AG04450 (cell line): ENCODE measurements at regions of chr19 and their contacts with region 1.

Region 1: GRCh38 chr19:34972163-34972705 is 8.2 kb upstream of the ZNF792 start:
- DNase-seq: no peak
- H3K4me3 ChIP-seq: no peak overlapping the region
- H3K27ac ChIP-seq: no peak overlapping the region
- H3K27me3 ChIP-seq: peaks cover 8% of the 10 kb centered on the region
- CTCF ChIP-seq: no peak

Region 2: DNA sequence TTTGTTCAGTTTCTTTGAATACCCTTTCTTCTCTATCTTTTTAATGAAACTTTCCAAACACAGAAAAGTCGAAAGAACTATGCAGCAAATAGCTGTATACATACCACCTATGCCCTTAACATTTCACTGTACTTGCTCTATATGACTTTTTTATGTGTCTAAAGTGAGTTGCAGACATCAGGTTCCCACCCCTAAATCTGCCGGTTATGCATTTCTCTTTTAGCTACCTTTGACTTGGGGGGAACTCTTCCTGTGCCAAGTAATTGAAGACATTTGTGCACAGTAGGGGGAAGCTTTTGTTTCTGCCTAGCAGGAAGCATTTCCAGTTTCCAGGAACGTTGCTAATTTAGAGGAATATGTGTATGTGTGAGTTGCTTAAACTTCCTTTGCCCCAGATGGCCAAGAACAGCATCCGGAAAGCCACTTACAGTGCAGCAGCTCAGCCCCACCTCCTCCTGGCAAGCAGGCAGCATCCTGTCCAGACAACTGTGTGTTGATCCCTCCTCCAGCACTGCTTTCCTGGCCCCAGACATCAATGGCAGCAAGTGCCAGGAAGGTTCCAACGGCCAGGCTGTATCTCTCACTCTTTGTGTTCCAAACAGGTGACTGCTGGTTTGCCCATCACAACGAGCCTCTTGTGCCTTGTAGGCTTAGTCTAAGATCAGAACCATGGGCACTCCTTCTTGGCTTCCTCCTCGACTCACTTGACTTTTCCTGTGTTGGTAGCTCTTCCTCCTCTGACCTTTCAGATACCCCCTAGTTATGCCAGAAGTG is 13.2 kb after region 1 on chr19:
- CTCF ChIA-PET with region 1: interaction called, 11 read pairs
- POLR2A ChIA-PET with region 1: no interaction called
- DNase-seq: no peak
- H3K4me3 ChIP-seq: no peak overlapping the region
- H3K27ac ChIP-seq: no peak overlapping the region
- H3K27me3 ChIP-seq: peaks cover 10% of the 10 kb centered on the region
- CTCF ChIP-seq: no peak

Region 3: DNA sequence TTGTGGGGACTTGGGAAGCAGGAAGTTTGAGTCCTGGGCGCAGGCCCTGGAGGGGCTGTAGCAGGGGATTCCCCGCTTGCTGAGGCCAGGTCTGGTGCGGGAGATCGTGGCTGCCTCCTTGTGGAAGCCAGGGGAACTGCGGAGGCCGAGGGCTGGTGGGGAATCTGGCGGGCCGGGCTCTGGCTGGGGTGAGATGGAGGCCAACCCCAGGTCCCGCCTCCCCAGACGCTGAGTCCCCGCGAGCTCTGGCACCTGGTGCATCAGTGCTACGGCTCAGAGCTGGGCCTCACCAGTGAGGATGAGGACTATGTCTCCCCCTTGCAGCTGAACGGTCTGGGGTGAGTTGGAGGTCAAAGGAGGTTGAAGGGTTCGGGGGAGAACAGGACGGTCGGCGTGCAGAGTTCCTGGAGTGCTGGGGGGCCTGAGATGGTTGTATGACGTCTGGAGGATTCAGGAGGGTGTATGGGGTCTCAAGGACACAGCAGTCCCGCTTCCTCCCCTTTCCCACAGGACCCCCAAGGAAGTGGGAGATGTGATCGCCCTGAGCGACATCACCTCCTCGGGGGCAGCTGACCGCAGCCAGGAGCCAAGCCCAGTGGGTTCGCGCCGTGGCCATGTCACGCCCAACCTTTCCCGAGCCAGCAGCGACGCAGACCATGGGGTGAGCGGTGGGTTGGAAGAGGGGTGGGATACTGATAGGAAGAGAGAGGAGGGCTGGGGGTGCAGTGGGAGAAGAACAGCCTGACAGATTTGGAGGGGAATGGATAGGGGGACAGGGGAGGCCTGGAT is 41.0 kb after region 1 on chr19:
- CTCF ChIA-PET with region 1: interaction called, 31 read pairs
- POLR2A ChIA-PET with region 1: no interaction called
- DNase-seq: no peak
- H3K4me3 ChIP-seq: no peak overlapping the region
- H3K27ac ChIP-seq: no peak overlapping the region
- H3K27me3 ChIP-seq: no peaks in the 10 kb centered on the region
- CTCF ChIP-seq: peak; percentile 97